ENCODE measurements at regions of chr14 and their contacts with region 1.

Region 1: DNA sequence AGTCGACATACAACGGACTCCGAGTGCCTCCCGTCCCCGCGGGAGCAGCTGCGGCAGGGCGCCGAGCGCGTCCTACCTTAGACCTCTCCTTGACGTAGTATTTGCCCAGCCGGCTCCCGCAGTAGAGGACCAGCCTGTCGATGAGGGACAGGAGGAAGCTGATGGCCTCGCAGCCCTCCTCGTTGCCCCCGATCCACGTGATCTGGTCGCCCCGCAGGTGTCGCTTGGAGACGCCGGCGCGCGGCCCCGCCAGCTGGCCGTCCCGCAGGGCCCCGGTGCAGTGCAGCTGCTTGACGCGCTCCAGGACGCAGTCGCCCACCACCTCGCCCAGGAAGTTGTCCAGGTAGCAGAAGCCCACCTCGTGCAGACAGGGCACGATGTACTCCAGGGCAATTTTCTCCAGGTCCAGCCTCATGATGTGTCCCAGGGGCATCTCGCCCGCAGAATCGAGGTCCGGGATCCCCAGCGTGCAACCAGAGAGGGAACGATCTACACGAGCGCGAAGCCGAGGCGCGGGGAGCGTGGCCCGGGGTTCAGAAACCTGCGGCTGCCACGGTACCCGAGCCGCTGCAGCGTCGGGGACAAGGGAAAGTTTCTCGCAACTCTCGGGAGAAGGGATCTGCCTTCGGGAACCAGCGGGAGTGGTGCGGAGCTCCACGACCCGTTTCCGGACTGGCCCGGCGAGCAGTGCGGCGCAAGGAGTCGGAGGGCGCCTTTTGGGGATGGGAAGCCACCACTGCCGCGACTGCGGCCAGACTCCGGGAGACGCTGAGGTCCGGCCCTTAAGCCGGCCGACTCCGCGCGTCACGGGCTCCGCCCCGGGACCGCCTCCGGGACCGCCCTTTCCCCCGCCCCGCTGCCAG is at the start of gene EGLN3:
- H3K4me3 Mint-ChIP-seq: peak within 1 kb of the TSS; percentile 83
- H3K27ac Mint-ChIP-seq: peak within 1 kb of the TSS; percentile 71
- H3K4me1 Mint-ChIP-seq: peaks cover 35% of the 10 kb centered on the region
- H3K27me3 Mint-ChIP-seq: peaks cover 76% of the 10 kb centered on the region

Region 2: DNA sequence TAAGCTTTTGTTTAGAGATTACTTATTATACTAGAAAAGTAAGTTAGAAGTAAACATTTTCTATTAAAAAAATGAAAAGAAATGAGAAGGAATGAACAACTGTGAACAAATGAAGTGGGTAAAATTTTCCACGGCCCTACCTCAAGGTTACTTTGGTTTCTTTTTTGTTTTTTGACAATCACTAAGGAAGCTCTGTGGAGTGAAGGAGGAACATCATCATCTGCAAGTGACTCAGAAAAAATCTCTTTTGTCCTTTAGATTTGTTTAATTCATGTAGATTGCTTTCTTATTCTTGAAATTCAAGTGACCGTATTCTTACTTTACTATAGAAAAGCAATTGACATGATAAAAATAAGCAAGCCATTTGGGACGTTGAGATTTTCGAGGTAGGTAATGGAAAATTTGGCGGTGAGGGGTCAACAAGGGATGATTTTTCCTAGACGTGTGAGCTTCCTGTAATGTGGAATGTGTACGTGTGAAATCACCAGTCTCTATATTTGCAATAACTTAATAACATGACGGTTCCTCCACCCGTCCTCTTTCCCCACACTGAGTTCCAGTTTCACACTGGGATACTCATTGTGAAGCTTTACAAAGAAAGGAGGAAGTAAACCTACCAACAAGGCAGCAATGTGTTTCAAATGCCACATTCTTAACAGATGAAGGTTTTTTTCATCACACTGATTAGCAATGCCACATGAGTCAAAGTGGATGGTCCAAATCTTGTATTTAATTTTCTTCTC is 62.6 kb after region 1 on chr14:
- intact Hi-C with region 1: loop called (anchors 2 kb)
- H3K4me3 Mint-ChIP-seq: peak overlapping the region; percentile 51
- H3K27ac Mint-ChIP-seq: peak overlapping the region; percentile 92
- H3K4me1 Mint-ChIP-seq: peaks cover 52% of the 10 kb centered on the region
- H3K27me3 Mint-ChIP-seq: no peaks in the 10 kb centered on the region

Region 3: DNA sequence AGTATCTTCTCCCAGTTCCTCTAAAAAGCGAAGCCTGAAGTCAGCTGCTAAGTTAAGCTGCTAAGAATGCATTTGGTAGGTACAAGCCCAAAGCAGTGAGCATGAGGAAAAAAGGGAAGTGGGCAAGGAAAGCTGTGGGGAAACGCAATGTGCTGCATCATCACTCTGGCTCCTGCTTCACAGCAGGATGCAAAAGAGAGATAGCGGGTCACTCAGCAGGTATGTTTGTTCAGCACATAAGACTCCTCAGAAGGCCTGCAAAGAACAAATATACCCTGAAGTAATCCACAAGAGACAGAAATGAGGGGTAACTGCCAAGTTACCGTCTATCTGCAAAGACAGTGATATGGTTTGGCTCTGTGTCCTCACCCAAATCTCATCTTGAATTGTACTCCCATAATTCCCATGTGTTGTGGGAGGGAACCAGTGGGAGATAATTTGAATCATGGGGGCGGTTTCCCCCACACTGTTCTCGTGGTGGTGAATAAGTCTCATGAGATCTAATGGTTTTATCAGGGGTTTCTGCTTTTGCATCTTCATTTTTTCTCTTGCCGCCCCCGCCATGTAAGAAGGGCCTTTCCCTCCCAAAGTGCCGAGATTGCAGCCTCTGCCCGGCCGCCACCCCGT is 127.7 kb after region 1 on chr14:
- intact Hi-C with region 1: loop called (anchors 5 kb)
- H3K4me3 Mint-ChIP-seq: no peak overlapping the region
- H3K27ac Mint-ChIP-seq: peak overlapping the region; percentile 76
- H3K4me1 Mint-ChIP-seq: peaks cover 27% of the 10 kb centered on the region
- H3K27me3 Mint-ChIP-seq: peaks cover 5% of the 10 kb centered on the region